HEK293 (cell line): ENCODE measurements at regions of chr16 and their contacts with region 1.

Region 1: GRCh38 chr16:4253394-4254150 is 11.7 kb upstream of the SRL start:
- H3K4me3 ChIP-seq: peak overlapping the region; percentile 52
- H3K27ac ChIP-seq: peak overlapping the region; percentile 73
- H3K4me1 ChIP-seq: no peaks in the 10 kb centered on the region
- CTCF ChIP-seq: peak; percentile 45; the same call in 1 of the 2 replicates

Region 2: DNA sequence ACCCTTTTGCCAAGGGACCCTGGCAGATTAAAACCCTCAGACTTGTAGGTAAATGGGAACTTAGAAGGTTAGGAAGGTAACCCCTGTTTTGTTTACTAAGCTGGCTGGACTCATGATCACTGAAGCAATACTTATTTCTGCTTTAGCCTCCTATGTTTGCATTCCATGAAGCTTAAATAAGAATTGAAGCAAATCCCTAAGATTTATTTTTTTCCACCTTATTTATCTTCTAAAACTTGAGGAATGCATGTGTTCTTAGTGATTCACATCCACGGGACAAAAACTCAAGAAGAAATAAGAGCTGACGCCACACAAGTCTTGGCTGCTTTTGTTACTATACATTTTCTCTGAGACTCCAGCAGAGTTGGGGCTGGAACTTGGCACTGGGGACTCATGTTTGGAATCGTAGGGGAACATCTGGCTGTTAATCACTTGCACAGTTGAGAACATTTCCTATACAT is 717.3 kb before region 1 on chr16:
- CTCF ChIA-PET with region 1: no interaction called
- POLR2A ChIA-PET with region 1: no interaction called
- H3K4me3 ChIP-seq: no peak overlapping the region
- H3K27ac ChIP-seq: no peak overlapping the region
- H3K4me1 ChIP-seq: no peaks in the 10 kb centered on the region
- CTCF ChIP-seq: no peak

Region 3: GRCh38 chr16:4183237-4184036 is 70.1 kb before region 1 on chr16:
- CTCF ChIA-PET with region 1: interaction called, 10 read pairs
- POLR2A ChIA-PET with region 1: interaction called, 13 read pairs
- H3K4me3 ChIP-seq: peak overlapping the region; percentile 62
- H3K27ac ChIP-seq: peak overlapping the region; percentile 64
- H3K4me1 ChIP-seq: 0 out of 2 replicates have a peak, but pooled peaks cover 2% of the 10 kb centered on the region
- CTCF ChIP-seq: 0 out of 2 replicates have a peak, but pooled peaks have one; percentile 23

Region 4: DNA sequence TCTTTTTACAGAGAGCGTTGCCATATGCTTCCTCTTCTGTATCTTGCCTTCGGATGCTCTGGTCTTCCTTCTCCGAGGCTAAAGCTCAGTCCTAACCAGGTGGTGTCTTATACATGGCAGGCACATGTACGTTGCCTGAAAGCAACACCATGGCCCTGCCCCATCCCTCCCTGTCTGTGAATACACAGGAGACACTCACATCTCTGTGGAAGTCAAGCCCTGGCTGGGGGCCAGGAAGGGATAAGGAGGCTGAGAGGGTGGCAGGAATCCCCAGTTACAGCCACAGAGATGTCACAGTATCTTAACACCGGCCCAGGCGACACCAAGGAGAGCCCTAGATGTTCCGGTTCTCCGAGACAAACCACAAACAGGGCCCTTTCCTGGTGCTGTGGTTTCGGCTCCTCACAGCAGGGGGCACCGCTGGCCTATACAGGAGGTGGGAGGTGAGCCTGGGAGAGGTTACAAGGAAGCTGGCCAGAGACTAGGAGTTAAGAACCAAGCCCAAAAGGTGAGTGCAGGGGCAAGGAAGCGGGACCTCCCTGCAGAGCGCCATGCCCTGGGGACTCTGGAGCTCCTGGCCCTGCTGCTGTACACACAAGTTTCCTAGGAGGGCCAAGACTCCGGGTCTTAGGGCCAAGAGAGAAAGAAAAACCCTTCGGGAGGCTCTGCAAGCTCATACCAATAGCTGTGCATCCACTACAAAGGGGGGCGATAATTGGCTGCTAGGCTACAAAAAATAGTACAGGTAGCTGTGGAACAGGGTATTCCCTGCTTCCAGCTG is 53.4 kb before region 1 on chr16:
- CTCF ChIA-PET with region 1: interaction called, 73 read pairs
- POLR2A ChIA-PET with region 1: interaction called, 7 read pairs
- H3K4me3 ChIP-seq: no peak overlapping the region
- H3K27ac ChIP-seq: no peak overlapping the region
- H3K4me1 ChIP-seq: no peaks in the 10 kb centered on the region
- CTCF ChIP-seq: peak; percentile 80

Region 5: DNA sequence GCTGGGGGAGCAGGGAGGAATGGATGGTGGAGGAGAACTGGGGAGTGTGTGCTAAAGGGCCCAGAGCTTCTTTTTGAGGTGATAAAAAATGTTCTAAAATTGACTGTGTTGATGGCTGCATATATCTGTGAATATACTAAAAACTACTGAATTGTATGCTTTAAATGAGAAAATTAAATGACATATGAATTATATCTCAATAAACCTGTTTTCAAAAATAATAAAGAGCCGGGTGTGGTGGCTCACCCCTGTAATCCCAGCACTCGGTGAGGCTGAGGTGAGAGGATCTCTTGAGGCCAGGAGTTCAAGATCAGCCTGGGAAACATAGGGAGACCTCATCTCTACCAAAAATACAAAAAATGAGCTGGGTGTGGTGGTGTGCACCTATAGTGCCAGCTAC is 28.5 kb before region 1 on chr16:
- CTCF ChIA-PET with region 1: interaction called, 14 read pairs
- POLR2A ChIA-PET with region 1: no interaction called
- H3K4me3 ChIP-seq: no peak overlapping the region
- H3K27ac ChIP-seq: no peak overlapping the region
- H3K4me1 ChIP-seq: no peaks in the 10 kb centered on the region
- CTCF ChIP-seq: no peak

Region 6: DNA sequence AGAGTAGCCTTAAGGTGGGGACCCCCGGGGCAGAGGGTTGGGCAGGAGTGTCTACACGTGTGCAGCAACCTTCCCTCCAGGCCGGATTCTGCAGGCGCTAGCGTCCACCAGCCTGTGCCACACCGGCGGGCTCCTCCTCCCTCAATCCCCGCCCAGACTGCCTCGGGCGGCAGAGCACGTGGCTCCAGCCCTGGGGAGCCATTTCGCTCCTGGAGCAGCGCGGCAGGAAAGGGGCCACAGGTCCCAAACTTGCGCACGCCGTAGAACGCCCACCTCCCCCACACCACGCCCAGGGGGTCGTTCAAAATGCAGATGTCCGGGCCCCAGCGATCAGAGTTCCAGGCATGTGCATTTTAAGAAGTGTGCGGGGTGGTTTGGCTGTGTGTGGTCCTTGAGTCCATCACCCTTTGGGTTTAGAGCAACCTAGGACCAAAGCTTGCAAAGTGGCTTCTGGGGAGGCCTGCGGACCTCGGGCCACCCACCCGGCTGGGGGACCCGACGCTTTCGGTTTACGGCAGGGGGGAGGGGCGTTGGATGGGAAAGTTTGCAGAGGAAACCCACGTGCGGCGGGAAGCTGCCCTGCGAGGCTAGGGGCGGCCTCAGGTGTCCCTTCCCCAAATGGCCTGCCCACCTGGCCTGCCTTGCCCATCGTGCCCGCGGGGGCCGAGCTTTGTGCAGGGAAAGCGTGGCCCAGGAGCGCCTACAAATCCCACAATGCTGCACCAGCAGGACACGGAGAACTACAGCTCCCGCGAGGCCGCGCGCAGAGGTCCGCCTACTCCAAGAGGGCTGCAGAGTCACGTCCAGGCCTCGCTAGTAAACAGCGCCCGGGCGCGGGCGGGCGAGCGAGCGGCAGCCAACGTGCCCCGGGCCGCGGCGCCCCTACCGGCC is 17.8 kb after region 1 on chr16:
- CTCF ChIA-PET with region 1: interaction called, 32 read pairs
- POLR2A ChIA-PET with region 1: interaction called, 45 read pairs
- H3K4me3 ChIP-seq: peak overlapping the region; percentile 57
- H3K27ac ChIP-seq: peak overlapping the region; percentile 97
- H3K4me1 ChIP-seq: peaks cover 6% of the 10 kb centered on the region
- CTCF ChIP-seq: peak; percentile 43

Region 7: GRCh38 chr16:4339909-4340308 is 86.3 kb after region 1 on chr16:
- CTCF ChIA-PET with region 1: no interaction called
- POLR2A ChIA-PET with region 1: no interaction called
- H3K4me3 ChIP-seq: no peak overlapping the region
- H3K27ac ChIP-seq: 0 out of 2 replicates have a peak overlapping the region, but pooled peaks have one; percentile 2
- H3K4me1 ChIP-seq: peaks cover 2% of the 10 kb centered on the region; the same call in 1 of the 2 replicates
- CTCF ChIP-seq: peak; percentile 35; the same call in 1 of the 2 replicates

Region 8: DNA sequence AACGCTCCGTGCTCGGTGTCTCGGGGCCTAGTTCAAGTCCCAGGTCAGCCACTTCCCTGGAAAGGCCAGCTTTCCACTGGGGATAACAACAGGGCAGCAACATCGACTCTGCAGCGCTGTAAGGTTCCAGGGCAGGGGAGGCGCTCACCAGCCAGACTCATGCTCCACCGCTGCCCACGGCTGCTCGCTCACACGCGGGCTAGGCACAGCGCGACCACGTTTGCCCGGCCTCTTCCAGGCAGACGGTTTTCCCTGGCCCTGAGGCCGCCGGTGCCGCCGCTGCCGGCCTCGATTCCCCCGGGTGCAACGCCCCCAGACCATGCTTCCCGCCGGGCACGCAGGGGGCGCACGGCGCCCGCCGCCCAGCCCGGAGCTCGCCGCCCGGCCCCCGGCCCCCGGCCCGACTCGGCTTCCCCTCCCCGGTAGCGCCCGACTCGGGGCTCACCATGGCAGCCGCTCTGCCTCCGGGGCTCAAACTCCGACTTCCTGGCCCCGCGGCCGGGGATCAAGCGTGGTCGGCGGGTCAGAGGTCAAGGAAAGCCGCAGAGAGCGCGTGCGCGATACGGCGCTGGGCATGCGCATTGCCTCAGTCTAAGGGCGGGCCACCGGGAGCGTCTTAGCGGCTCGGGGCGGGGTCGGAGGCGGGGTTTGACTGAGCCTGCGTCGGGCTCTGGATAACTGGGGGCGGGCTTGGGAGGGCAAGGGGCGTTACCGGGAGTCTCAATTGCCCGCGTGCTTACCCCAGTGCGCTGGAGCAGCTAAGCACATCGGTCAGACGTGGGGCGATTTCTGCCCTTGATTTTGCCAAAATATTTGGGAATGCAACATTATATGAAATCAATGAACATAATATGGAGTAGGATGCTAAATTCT is 97.5 kb after region 1 on chr16 and contains the start of gene PAM16:
- CTCF ChIA-PET with region 1: interaction called, 14 read pairs
- POLR2A ChIA-PET with region 1: interaction called, 3 read pairs
- H3K4me3 ChIP-seq: peak within 1 kb of the TSS; percentile 95
- H3K27ac ChIP-seq: peak within 1 kb of the TSS; percentile 85
- H3K4me1 ChIP-seq: peaks cover 7% of the 10 kb centered on the region; the same call in 1 of the 2 replicates
- CTCF ChIP-seq: peak; percentile 66